CD4-positive, alpha-beta memory T cell (primary cell): ENCODE measurements at regions of chr22 and their contacts with region 1.

Region 1: GRCh38 chr22:50250555-50251476 is at the start of gene HDAC10:
- DNase-seq: peak; percentile 71 to 78 (median 74)
- H3K4me3 ChIP-seq: peak within 1 kb of the TSS; percentile 36 to 89
- H3K4me3 Mint-ChIP-seq: peak within 1 kb of the TSS; percentile 73 to 84 (median 78)
- H3K27ac ChIP-seq: peak within 1 kb of the TSS; percentile 66
- H3K27ac Mint-ChIP-seq: peak within 1 kb of the TSS in 6 of 7 donors; percentile 50 to 88 (median 64)
- H3K4me1 ChIP-seq: peaks cover 44% of the 10 kb centered on the region
- H3K4me1 Mint-ChIP-seq: peaks cover 7 to 29% (median 17%) of the 10 kb centered on the region in 4 donors
- H3K27me3 ChIP-seq: no peaks in the 10 kb centered on the region
- H3K27me3 Mint-ChIP-seq: peaks cover 1 to 2% of the 10 kb centered on the region in 2 donors
- total RNA-seq, gene HDAC10: 141 to 151 TPM

Region 2: DNA sequence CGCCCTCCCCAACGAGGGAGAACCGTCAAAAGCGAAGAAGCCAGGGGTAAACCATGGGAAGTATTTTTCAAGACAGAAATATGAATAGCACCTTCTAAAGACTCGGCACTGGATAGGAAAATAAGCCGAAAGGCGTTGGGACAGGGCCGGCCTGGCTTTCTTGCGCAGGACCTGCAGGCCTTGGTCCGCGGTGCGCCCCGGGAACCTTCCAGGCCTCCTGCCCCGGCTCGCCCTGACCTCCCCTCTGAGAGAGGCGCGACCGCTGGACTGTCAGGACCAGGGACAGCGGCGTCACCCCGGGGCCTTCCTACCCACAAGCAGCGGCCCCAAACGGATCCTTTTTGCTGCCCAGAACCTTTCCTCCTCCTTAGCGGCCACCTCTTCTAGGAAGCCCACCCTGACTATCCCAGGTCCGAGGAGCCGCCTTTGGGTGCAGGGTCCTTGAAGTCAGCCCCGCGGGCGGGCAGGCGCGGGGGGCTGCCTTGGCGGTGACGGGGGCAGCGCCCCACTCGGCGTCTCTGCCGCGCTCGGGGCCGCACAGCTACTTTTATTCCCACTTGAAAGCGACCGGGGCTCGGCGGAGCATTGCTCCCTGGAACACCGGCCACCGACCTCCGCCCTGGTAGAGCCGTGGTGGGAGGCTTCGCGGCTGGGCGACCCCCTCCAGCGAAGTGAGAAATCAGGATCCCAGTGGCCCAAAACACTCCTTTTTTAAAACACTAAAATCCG is 20.0 kb after region 1 on chr22:
- CTCF ChIA-PET with region 1: interaction called, 19 read pairs
- POLR2A ChIA-PET with region 1: interaction called, 26 read pairs
- intact Hi-C with region 1: loop called (anchors 1 kb)
- DNase-seq: peak; percentile 70 to 78 (median 75)
- H3K4me3 ChIP-seq: peak overlapping the region; percentile 42 to 64
- H3K4me3 Mint-ChIP-seq: peak overlapping the region; percentile 61 to 83 (median 74)
- H3K27ac ChIP-seq: peak overlapping the region; percentile 33
- H3K27ac Mint-ChIP-seq: peak overlapping the region in 4 of 7 donors; percentile 19 to 76 (median 70)
- H3K4me1 ChIP-seq: peaks cover 30% of the 10 kb centered on the region
- H3K4me1 Mint-ChIP-seq: peaks cover 1 to 24% (median 10%) of the 10 kb centered on the region in 4 donors
- H3K27me3 ChIP-seq: no peaks in the 10 kb centered on the region
- H3K27me3 Mint-ChIP-seq: no peaks in the 10 kb centered on the region

Region 3: GRCh38 chr22:50276143-50276542 is 25.3 kb after region 1 on chr22:
- CTCF ChIA-PET with region 1: interaction called, 10 read pairs
- POLR2A ChIA-PET with region 1: interaction called, 26 read pairs
- intact Hi-C with region 1: no loop called
- DNase-seq: peak in 3 of 5 donors; percentile 24 to 58 (median 52)
- H3K4me3 ChIP-seq: no peak overlapping the region
- H3K4me3 Mint-ChIP-seq: no peak overlapping the region
- H3K27ac ChIP-seq: no peak overlapping the region
- H3K27ac Mint-ChIP-seq: peak overlapping the region in 1 of 7 donors; percentile 66
- H3K4me1 ChIP-seq: peaks cover 6% of the 10 kb centered on the region
- H3K4me1 Mint-ChIP-seq: peaks cover 0 to 8% (median 3%) of the 10 kb centered on the region in 4 donors
- H3K27me3 ChIP-seq: no peaks in the 10 kb centered on the region
- H3K27me3 Mint-ChIP-seq: no peaks in the 10 kb centered on the region

Region 4: GRCh38 chr22:50474668-50475492 is 224.1 kb after region 1 on chr22 and contains the start of gene SBF1:
- CTCF ChIA-PET with region 1: no interaction called
- POLR2A ChIA-PET with region 1: interaction called, 7 read pairs
- intact Hi-C with region 1: loop called (anchors 10 kb)
- DNase-seq: peak; percentile 83 to 88 (median 84)
- H3K4me3 ChIP-seq: peak within 1 kb of the TSS; percentile 73 to 79
- H3K4me3 Mint-ChIP-seq: peak within 1 kb of the TSS; percentile 88 to 99 (median 95)
- H3K27ac ChIP-seq: peak within 1 kb of the TSS; percentile 75
- H3K27ac Mint-ChIP-seq: peak within 1 kb of the TSS; percentile 89 to 98 (median 94)
- H3K4me1 ChIP-seq: peaks cover 47% of the 10 kb centered on the region
- H3K4me1 Mint-ChIP-seq: peaks cover 28 to 62% (median 40%) of the 10 kb centered on the region in 4 donors
- H3K27me3 ChIP-seq: no peaks in the 10 kb centered on the region
- H3K27me3 Mint-ChIP-seq: no peaks in the 10 kb centered on the region
- total RNA-seq, gene SBF1: 217 to 221 TPM